ENCODE measurements at regions of chr11 and their contacts with region 1.

Region 1: GRCh38 chr11:41245702-41246398 is 213.6 kb downstream of the LRRC4C start:
- DNase-seq: no peak
- ATAC-seq: peak; percentile 75 to 86

Region 2: DNA sequence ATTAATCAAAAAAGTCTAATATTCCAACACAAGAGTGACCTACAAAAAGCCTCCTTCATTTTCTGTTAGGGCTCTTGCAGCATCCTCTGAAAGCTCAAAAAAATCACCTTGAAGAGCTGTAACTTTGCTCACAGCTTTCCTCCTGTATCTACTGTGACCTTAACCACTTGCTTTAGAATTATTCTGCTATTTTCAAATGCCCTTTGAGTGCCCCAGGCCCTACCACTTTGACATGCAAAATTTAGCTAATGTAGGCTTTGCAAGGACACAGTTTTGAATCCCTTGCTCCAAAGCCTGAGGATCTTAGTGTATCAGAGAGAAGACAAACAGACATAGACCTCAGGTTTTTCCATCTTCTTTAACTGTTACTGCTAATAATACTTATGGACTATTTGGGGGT is 39.5 kb before region 1 on chr11:
- intact Hi-C with region 1: no loop called
- DNase-seq: no peak
- ATAC-seq: no peak

Region 3: DNA sequence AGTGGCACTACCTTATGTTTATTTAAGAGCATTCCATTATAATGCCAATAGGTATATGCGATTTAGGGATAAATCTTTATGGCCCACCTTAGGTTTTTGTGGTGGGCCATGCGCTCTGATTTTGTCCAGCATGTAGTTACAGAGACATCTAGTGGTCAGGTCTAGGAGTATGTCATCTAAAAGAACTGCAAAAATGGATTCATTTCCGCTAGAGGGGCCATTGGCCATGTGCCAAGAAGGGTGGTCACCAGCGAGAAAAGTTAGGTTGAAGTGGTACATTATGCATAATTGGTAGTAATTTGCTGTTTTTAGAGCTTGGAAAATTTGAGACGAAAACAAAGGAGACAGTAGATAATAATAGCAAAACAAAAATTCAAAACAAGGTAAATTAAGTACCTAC is 185.9 kb after region 1 on chr11:
- intact Hi-C with region 1: loop called in 1 of 2 experiments (anchors 2 kb)
- DNase-seq: no peak
- ATAC-seq: no peak

Region 4: DNA sequence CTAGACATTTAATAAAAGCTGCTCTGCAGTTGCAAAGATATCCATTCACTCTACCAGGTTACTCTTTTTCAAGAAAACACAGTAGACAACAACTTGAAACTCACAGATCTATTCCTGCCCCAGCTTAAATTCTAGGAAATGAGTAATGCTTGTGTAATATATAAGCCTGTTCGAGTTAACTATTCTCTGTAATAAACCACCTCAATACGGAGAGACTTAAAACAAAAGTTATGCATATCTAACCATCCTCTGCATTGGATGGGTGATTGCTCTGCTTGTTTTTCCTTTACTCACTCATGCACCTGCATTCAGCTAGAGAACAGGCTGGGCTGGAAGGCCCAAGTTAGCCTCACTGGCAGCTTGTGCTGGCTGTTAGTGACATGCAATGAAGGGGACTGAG is 200.3 kb after region 1 on chr11:
- intact Hi-C with region 1: loop called in 1 of 2 experiments (anchors 5 kb)
- DNase-seq: no peak
- ATAC-seq: no peak

Measured in left cardiac atrium (tissue), 4 donors.